ENCODE measurements at regions of chr3 and their contacts with region 1.

Region 1: GRCh38 chr3:39541917-39542329 is 74.4 kb downstream of the MOBP start:
- DNase-seq: no peak
- H3K4me3 Mint-ChIP-seq: no peak overlapping the region
- H3K27ac Mint-ChIP-seq: no peak overlapping the region
- H3K4me1 Mint-ChIP-seq: no peaks in the 10 kb centered on the region
- H3K27me3 Mint-ChIP-seq: no peaks in the 10 kb centered on the region
- CTCF ChIP-seq: peak; percentile 26

Region 2: DNA sequence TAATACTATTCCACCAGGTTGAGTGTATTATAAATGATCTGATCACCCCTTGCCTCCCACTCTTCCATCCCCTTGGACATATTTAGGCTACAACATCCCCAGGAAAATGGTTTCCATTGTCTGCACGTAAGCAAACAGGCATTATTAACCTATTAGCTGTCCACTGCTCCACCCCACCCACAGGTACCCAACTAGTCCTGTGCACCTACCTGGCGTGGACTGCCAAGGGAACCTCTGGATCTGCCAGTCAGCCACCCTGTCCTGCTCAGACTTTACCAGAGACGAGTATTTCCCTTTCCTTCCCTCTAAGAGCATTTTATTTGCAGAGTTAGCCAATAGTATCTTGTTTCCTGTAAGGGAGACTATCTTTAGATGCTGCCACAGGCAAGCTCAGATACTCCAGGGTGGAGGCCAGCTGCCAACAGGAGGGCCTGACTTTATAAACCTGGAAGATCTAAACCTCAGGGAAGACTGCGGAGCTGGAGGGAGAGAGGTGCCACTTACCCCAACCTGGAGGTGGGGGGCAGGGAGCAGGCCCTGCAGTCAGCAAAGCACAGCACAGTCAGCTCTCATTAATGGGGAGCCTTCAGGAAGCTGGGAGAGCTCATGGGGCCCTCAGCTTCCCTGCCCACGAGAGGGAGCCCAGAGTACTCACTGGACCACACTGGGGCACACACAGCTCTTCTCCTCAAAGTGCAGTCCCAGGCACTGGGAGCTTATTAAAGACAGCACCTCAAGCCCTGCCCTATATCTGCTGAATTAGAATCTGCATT is 262.0 kb before region 1 on chr3 and contains the start of gene CX3CR1:
- CTCF ChIA-PET with region 1: no interaction called
- intact Hi-C with region 1: no loop called
- DNase-seq: no peak
- H3K4me3 Mint-ChIP-seq: no peak within 1 kb of the TSS
- H3K27ac Mint-ChIP-seq: no peak within 1 kb of the TSS
- H3K4me1 Mint-ChIP-seq: no peaks in the 10 kb centered on the region
- H3K27me3 Mint-ChIP-seq: peaks cover 39% of the 10 kb centered on the region
- CTCF ChIP-seq: no peak
- total RNA-seq, gene CX3CR1: not detected in 2 replicates

Region 3: DNA sequence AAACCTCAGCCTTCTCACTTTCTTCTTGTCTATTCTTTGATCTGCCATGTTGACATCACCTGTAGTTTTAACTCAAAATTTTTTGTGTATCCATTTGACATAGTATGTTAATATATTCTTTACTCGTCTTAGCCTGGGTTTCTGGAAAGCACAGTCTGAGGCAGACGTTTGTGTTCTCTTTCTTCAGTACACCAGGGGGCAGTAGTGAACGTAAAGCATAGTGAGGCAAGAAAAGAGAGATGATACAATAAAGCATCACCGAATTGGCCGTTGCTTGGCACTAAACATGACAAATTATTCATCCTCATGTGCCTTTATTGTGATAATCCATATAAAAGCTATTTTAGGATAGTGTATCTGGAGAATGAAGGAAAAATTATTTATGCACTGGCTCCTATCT is 126.5 kb after region 1 on chr3:
- CTCF ChIA-PET with region 1: no interaction called
- intact Hi-C with region 1: loop called (anchors 5 kb)
- DNase-seq: peak; percentile 15
- H3K4me3 Mint-ChIP-seq: no peak overlapping the region
- H3K27ac Mint-ChIP-seq: no peak overlapping the region
- H3K4me1 Mint-ChIP-seq: no peaks in the 10 kb centered on the region
- H3K27me3 Mint-ChIP-seq: no peaks in the 10 kb centered on the region
- CTCF ChIP-seq: peak; percentile 53

Region 4: GRCh38 chr3:39724233-39724846 is 182.4 kb after region 1 on chr3:
- CTCF ChIA-PET with region 1: no interaction called
- intact Hi-C with region 1: loop called (anchors 5 kb)
- DNase-seq: peak; percentile 29
- H3K4me3 Mint-ChIP-seq: no peak overlapping the region
- H3K27ac Mint-ChIP-seq: no peak overlapping the region
- H3K4me1 Mint-ChIP-seq: no peaks in the 10 kb centered on the region
- H3K27me3 Mint-ChIP-seq: no peaks in the 10 kb centered on the region
- CTCF ChIP-seq: no peak

Region 5: DNA sequence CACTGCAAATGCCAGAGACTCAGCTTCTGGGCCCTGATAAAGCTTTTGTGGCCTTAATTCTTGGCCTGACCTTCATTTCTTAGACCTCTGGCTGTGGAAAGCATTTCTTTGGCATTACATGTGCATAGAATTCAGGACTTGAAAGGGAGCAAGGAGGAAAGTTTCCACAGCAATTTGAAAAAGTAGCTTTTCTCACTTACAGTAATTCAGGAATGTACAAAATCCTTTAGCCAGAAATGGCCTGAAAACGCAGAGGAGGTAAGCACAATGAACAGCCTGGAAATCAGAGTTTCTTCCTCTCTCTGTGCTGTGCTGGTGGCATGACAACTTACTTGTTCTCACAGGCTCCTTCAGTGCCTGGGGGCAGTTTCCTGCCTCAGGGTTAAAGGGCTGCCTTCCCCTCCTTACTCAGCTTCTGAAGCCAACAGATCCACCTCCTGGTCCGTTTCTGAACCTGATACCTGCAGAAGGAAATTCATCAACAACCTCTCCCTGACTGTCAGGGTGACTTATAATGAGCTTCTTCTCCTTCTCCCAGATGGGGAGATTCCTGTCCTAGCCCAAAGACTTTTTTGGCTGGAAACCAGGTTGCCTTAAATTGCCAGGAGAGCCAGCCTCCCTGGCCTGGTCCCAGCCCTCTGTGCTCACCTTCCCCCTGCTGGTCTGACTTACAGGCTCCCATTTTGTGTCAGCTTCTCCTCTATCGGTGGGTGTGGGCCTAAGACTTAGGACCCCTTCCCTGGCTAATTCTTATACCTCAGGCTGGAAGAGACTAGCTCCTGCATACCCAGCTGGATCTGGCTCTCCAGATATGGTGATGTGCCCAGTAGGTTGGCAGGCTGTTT is 369.8 kb after region 1 on chr3:
- CTCF ChIA-PET with region 1: no interaction called
- intact Hi-C with region 1: loop called (anchors 5 kb)
- DNase-seq: peak; percentile 54
- H3K4me3 Mint-ChIP-seq: peak overlapping the region; percentile 16
- H3K27ac Mint-ChIP-seq: peak overlapping the region; percentile 71
- H3K4me1 Mint-ChIP-seq: peaks cover 48% of the 10 kb centered on the region
- H3K27me3 Mint-ChIP-seq: no peaks in the 10 kb centered on the region
- CTCF ChIP-seq: no peak

Region 6: DNA sequence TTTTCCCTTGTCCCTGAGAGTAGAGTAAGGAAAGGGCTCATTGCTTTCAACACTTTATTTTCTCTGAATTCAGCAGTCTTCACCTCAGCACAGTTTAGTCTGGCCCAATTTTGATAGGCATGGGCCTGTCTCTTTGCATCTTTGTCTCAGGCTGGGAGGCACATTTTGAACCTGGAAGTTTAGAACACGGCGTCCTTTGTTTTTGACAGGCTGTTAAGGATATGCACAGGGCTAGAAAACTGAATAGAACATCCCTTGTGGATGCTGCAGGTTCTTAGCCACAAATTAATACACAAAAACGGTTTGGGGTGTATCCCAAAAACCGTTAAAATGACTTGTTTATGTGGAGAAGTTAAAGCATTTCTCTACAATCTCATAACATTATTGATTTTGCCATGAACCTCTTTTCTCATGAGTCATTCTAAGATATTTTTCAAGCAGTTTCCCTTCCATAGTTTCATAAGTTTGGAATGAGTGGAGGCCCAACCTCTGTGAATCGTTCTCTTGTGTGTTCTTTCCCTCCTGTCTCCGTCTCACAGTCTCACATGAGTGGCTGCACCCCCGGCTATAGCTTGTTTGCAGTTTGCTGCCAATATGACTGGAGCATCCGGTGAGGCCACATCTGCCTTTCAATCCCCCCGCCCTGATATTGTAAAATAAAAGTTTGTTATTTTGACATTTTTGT is 574.7 kb after region 1 on chr3:
- CTCF ChIA-PET with region 1: no interaction called
- intact Hi-C with region 1: loop called (anchors 5 kb)
- DNase-seq: peak; percentile 74
- H3K4me3 Mint-ChIP-seq: peak overlapping the region; percentile 28
- H3K27ac Mint-ChIP-seq: peak overlapping the region; percentile 86
- H3K4me1 Mint-ChIP-seq: peaks cover 64% of the 10 kb centered on the region
- H3K27me3 Mint-ChIP-seq: no peaks in the 10 kb centered on the region
- CTCF ChIP-seq: no peak

Region 7: DNA sequence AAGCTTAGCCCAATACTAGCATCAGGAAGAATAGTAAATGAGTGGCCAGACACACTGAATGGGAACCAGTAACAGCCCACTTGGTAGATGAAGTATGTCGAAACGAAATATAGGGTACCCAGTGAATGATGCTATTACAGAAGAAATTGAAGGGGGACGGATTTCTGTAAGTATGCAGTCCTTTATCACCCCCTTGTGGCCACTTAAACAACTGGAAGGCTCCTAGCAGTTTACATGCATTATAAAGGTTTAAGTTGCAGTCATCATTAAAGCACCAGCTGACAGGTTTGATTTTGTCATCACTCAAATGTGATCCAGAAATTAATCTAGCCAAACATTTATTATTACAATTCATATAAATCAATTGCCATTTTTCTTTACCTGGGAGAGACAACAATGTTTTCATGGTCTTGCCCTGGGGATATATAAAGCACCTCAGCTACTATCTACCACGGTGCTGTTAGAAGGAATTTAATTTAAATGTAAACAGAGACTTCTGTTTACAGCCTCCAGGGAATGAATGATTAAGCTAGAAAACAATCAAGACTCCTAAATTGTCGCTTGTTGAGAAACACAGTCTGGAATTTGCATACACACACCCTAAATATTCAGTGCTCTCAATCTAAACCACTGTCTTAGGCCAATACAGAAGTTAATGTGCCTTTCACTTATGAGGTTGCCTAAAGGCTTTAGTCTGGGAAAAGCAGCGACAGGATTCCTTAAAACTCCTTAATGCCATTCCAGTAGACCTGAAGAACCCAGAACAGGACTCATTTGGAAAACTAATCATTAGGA is 775.3 kb after region 1 on chr3:
- CTCF ChIA-PET with region 1: no interaction called
- intact Hi-C with region 1: loop called (anchors 2 kb)
- DNase-seq: peak; percentile 35
- H3K4me3 Mint-ChIP-seq: no peak overlapping the region
- H3K27ac Mint-ChIP-seq: no peak overlapping the region
- H3K4me1 Mint-ChIP-seq: peaks cover 6% of the 10 kb centered on the region
- H3K27me3 Mint-ChIP-seq: no peaks in the 10 kb centered on the region
- CTCF ChIP-seq: peak; percentile 32

Measured in Calu3 (cell line).